AG04450 (cell line): ENCODE measurements at regions of chr10 and their contacts with region 1.

Region 1: DNA sequence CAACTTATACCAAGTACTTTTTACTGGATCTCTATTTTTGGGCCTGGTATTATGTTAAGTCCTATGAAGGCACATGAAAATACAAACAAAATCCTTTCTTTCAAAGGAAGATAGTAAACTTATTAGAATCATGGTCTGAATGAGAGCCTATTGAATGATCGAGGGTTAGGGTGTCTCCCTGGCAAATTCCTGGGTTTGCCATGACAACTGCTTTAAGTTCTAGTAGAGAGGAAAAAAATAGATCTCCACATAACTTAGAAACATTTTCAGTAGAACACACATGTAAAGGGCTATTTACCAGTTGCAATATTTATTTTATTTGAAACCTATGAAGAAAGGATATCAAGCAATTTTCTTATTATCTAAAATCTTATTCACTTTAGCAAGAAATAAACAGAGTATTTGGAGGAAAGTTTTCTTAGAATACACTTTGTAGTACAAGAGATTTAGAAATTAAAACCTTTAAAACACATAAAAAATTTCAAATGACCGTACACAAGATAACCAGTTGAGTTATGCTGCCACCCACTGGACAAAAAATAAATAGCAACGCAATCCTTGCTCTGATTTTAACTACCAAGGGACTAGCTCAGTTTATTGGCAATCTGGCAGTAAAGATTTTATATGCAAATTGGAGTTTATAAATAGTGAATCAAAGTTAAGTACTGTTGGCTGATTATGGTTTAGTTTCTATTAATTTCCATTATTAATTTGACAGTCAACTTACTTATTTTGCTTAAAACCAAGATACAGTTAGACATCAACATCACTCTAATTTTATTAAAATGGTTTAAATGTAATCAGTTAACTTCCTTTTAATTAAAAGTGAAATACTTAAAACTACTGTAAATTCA is 33.9 kb downstream of the CACUL1 start:
- DNase-seq: peak; percentile 33
- H3K4me3 ChIP-seq: no peak overlapping the region
- H3K27ac ChIP-seq: no peak overlapping the region
- H3K27me3 ChIP-seq: no peaks in the 10 kb centered on the region
- CTCF ChIP-seq: peak; percentile 79

Region 2: DNA sequence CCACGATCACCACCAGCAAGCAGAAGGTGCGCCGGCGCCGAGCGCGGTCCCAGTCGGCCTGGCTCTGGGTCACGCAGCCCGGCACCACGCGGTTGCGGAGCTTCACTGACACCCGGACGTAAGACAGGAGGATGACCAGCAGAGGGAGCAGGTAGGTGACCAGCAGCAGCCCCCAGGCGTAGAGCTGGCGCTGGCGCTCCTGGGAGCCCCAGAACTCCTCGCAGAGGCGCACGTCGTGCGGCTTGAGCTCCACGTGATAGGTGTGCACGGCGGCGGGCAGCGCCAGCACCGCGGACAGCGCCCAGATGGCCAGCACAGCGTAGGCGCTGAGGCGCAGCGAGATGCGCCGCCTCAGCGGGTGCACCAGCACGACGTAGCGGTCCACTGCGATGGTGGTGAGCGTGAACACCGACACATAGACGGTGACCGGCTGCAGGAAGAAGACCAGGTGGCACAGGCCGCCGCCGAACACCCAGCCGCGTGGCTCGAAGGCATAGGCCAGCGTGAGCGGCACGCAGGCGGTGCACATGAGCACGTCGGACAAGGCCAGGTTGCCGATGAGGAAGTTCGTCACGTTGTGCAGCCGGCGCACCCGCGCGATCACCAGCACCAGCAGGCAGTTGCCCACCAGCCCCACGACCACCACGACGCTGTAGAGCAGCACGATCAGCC is 126.4 kb before region 1 on chr10:
- CTCF ChIA-PET with region 1: interaction called, 11 read pairs
- POLR2A ChIA-PET with region 1: no interaction called
- DNase-seq: no peak
- H3K4me3 ChIP-seq: no peak overlapping the region
- H3K27ac ChIP-seq: no peak overlapping the region
- H3K27me3 ChIP-seq: peaks cover 18% of the 10 kb centered on the region
- CTCF ChIP-seq: no peak

Region 3: DNA sequence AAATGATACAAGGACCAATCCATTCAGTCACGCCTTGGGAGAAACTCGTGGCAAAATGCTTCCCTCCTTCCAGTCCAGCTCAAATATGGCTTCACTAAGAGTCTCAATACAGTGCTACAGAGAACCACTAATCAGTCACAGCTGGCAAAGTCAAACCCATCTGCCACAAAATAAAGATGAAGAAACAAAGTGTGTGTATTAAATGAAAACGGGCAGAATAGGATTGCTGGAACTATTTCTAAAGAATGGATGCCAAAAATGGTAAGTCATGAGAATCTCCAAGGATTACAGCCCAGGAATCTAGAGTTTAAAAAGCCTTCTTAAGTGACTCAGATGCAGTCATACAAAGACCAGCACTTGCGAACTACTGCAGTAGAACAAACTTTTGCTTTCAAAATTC is 28.0 kb before region 1 on chr10:
- CTCF ChIA-PET with region 1: interaction called, 31 read pairs
- POLR2A ChIA-PET with region 1: no interaction called
- DNase-seq: peak; percentile 70
- H3K4me3 ChIP-seq: no peak overlapping the region
- H3K27ac ChIP-seq: peak overlapping the region; percentile 58
- H3K27me3 ChIP-seq: no peaks in the 10 kb centered on the region
- CTCF ChIP-seq: no peak

Region 4: GRCh38 chr10:118732245-118733165 is 11.6 kb after region 1 on chr10:
- CTCF ChIA-PET with region 1: interaction called, 54 read pairs
- POLR2A ChIA-PET with region 1: no interaction called
- DNase-seq: no peak
- H3K4me3 ChIP-seq: no peak overlapping the region
- H3K27ac ChIP-seq: no peak overlapping the region
- H3K27me3 ChIP-seq: no peaks in the 10 kb centered on the region
- CTCF ChIP-seq: no peak

Region 5: GRCh38 chr10:118775478-118775877 is 54.6 kb after region 1 on chr10:
- CTCF ChIA-PET with region 1: no interaction called
- POLR2A ChIA-PET with region 1: no interaction called
- DNase-seq: no peak
- H3K4me3 ChIP-seq: no peak overlapping the region
- H3K27ac ChIP-seq: no peak overlapping the region
- H3K27me3 ChIP-seq: peaks cover 2% of the 10 kb centered on the region
- CTCF ChIP-seq: no peak; the same call in 1 of the 2 replicates